ENCODE measurements at regions of chr17 and their contacts with region 1.

Region 1: GRCh38 chr17:32659419-32659842 is 172.6 kb downstream of the CDK5R1 start:
- DNase-seq: peak; percentile 77
- H3K4me3 Mint-ChIP-seq: no peak overlapping the region
- H3K27ac Mint-ChIP-seq: no peak overlapping the region
- H3K4me1 Mint-ChIP-seq: no peaks in the 10 kb centered on the region
- H3K27me3 Mint-ChIP-seq: no peaks in the 10 kb centered on the region

Region 2: GRCh38 chr17:32671896-32672295 is 12.5 kb after region 1 on chr17:
- CTCF ChIA-PET with region 1: interaction called, 11 read pairs
- DNase-seq: no peak
- H3K4me3 Mint-ChIP-seq: no peak overlapping the region
- H3K27ac Mint-ChIP-seq: no peak overlapping the region
- H3K4me1 Mint-ChIP-seq: no peaks in the 10 kb centered on the region
- H3K27me3 Mint-ChIP-seq: peaks cover 3% of the 10 kb centered on the region

Region 3: DNA sequence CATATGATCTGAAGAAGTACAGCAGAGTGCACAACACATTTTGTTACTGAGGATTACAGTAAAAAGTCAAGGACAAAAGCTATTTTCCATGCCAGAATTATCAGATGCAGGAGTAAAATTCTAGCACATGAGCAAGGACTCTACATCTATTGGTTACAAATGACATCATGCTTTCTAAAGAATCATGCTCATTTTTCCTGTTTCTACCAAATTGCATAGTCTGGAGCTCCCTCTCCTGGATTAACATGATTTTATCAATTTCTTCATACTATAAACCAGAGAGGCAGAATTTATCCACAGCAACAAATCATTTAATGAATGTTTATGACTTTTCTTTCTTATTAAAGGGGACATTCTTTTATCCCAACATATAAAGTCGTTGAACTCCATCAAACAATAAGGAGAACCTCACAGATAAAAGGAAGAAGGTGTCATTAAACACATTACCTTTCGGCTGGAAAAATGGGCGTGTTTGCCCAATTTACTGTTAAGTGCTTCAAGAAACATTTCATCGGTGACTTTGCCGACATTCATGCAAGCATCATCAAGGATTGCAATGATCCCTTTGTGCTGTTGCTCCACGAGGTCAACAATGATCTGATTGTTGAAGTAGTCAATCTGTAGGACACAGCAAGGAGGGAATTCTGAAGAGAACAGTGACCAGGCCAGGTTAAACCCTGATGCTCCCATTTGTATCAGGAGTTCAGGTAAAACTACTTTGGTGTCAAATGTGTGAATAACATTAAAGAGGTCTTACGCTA is 95.8 kb after region 1 on chr17:
- CTCF ChIA-PET with region 1: interaction called, 10 read pairs
- DNase-seq: no peak
- H3K4me3 Mint-ChIP-seq: no peak overlapping the region
- H3K27ac Mint-ChIP-seq: no peak overlapping the region
- H3K4me1 Mint-ChIP-seq: peaks cover 6% of the 10 kb centered on the region
- H3K27me3 Mint-ChIP-seq: no peaks in the 10 kb centered on the region